ENCODE measurements at regions of chr3 and their contacts with region 1.

Region 1: GRCh38 chr3:188348435-188349244 is 194.7 kb downstream of the LPP start:
- DNase-seq: peak; percentile 66 to 91 (median 84)
- ATAC-seq: peak; percentile 67 to 77 (median 74)
- H3K4me3 ChIP-seq: no peak overlapping the region
- H3K27ac ChIP-seq: peak overlapping the region; percentile 41 to 77 (median 64)
- H3K4me1 ChIP-seq: peaks cover 6 to 65% (median 41%) of the 10 kb centered on the region in 12 donors
- H3K27me3 ChIP-seq: no peaks in the 10 kb centered on the region
- CTCF ChIP-seq: no peak
- POLR2A ChIP-seq: no peak

Region 2: DNA sequence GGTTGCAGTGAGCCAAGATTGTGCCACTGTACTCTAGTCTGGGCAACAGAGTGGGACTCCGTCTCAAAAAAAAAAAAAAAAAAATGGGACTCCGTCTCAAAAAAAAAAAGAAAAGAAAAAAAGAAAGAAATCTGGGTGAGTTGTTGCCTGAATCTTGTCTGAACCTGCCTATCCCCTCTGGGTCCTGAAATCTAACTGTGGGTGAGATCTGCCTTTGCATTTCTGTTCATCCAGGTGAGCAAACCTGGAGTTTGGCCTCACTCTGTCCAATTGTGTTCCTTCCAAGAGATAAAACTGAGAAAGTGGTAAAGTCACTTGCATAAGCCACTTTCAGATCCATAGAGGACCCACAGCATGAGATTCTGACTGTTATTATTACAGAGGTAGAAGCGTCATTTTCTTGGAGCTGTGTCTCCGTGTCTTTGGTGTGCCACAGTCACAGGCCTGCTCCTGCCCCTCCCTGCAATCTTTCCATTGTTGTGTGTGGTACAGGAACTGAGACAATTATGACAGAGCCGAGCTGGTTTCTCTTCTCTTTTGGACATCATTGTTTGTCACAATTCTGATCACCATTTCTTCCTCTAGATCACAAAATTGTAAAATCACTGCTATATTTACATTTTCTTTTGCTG is 41.2 kb after region 1 on chr3:
- intact Hi-C with region 1: loop called in 2 of 10 experiments (anchors 5 kb)
- DNase-seq: peak in 4 of 5 donors; percentile 34 to 64 (median 60)
- ATAC-seq: peak; percentile 72 to 93 (median 90)
- H3K4me3 ChIP-seq: no peak overlapping the region
- H3K27ac ChIP-seq: peak overlapping the region in 11 of 12 donors; percentile 0 to 85 (median 48)
- H3K4me1 ChIP-seq: peaks cover 0 to 41% (median 31%) of the 10 kb centered on the region in 12 donors
- H3K27me3 ChIP-seq: no peaks in the 10 kb centered on the region
- CTCF ChIP-seq: no peak
- POLR2A ChIP-seq: no peak

Region 3: GRCh38 chr3:188397766-188398705 is 49.4 kb after region 1 on chr3:
- intact Hi-C with region 1: loop called in 2 of 10 experiments (anchors 5 kb)
- DNase-seq: peak in 4 of 5 donors; percentile 16 to 60 (median 57)
- ATAC-seq: peak; percentile 40 to 83 (median 62)
- H3K4me3 ChIP-seq: peak overlapping the region in 9 of 12 donors; percentile 2 to 33 (median 23)
- H3K27ac ChIP-seq: peak overlapping the region; percentile 43 to 81 (median 72)
- H3K4me1 ChIP-seq: peaks cover 0 to 56% (median 29%) of the 10 kb centered on the region in 12 donors
- H3K27me3 ChIP-seq: no peaks in the 10 kb centered on the region
- CTCF ChIP-seq: no peak
- POLR2A ChIP-seq: no peak

Region 4: GRCh38 chr3:188584162-188584529 is 235.5 kb after region 1 on chr3:
- intact Hi-C with region 1: loop called in 1 of 10 experiments (anchors 10 kb)
- DNase-seq: no peak
- ATAC-seq: peak in 2 of 4 donors; percentile 66 to 71
- H3K4me3 ChIP-seq: no peak overlapping the region
- H3K27ac ChIP-seq: peak overlapping the region in 3 of 12 donors; percentile 14 to 60 (median 52)
- H3K4me1 ChIP-seq: peaks cover 0 to 66% (median 14%) of the 10 kb centered on the region in 12 donors
- H3K27me3 ChIP-seq: no peaks in the 10 kb centered on the region
- CTCF ChIP-seq: no peak
- POLR2A ChIP-seq: no peak